ENCODE measurements at regions of chr12 and their contacts with region 1.

Region 1: DNA sequence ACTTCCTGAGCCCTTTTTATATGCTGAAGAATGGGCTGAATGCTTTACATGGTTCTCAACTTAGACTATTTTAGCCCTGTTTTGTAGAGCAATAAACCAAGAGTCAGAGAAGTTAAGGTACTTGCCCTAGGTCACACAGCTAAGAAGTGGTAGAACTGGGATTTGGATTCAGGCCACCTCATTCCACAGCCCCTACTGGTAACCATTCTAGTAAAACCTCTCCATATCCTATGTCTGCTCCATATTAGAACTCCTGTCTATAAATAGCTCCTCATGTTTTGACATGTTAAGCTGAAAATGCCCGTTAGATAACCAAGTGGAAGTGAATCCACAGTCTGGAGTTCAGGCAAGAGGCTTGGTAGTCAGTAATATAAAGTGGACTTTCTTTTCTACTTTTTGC is 111.6 kb downstream of the HECTD4 start:
- DNase-seq: no peak
- H3K4me3 ChIP-seq: no peak overlapping the region
- CTCF ChIP-seq: no peak

Region 2: DNA sequence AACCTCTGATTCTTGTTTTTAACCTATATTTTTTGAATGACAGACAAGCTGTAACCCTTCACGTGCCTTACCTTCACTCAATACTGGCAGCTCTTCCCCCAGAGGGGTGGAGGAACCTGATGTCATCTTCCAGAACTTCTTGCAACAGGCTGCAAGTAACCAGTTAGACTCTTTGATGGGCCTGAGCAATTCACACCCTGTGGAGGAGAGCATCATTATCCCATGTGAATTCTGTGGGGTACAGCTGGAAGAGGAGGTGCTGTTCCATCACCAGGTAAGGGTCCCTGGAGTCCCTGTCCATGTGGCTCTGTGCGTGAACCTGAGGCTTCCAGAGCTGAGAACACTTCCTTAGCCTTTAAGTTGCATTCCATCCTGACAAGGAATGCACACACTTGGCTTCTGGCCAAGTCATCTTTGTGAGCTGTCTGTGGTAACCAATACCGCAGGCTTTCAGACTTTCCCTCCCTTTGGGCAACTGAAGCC is 122.6 kb before region 1 on chr12:
- in situ Hi-C with region 1: no loop called
- DNase-seq: peak; percentile 71
- H3K4me3 ChIP-seq: no peak overlapping the region
- CTCF ChIP-seq: no peak

Region 3: GRCh38 chr12:112353389-112353788 is 82.7 kb after region 1 on chr12:
- in situ Hi-C with region 1: loop called (anchors 5 kb)
- DNase-seq: no peak
- H3K4me3 ChIP-seq: no peak overlapping the region
- CTCF ChIP-seq: no peak

Region 4: GRCh38 chr12:112393328-112393727 is 122.7 kb after region 1 on chr12:
- in situ Hi-C with region 1: loop called (anchors 10 kb)
- DNase-seq: no peak
- H3K4me3 ChIP-seq: no peak overlapping the region
- CTCF ChIP-seq: no peak

Measured in astrocyte of the cerebellum (primary cell).